Tibial artery (tissue), 4 donors: ENCODE measurements at regions of chr16 and their contacts with region 1.

Region 1: GRCh38 chr16:414395-415169 is 10.9 kb upstream of the RAB11FIP3 start:
- DNase-seq: no peak
- H3K4me3 ChIP-seq: no peak overlapping the region
- H3K27ac ChIP-seq: no peak overlapping the region
- H3K4me1 ChIP-seq: no peaks in the 10 kb centered on the region
- H3K27me3 ChIP-seq: no peaks in the 10 kb centered on the region
- CTCF ChIP-seq: no peak

Region 2: GRCh38 chr16:324451-325334 is 89.9 kb before region 1 on chr16:
- intact Hi-C with region 1: no loop called
- DNase-seq: no peak
- H3K4me3 ChIP-seq: no peak overlapping the region
- H3K27ac ChIP-seq: no peak overlapping the region
- H3K4me1 ChIP-seq: peaks cover 0 to 31% (median 17%) of the 10 kb centered on the region in 4 donors
- H3K27me3 ChIP-seq: no peaks in the 10 kb centered on the region
- CTCF ChIP-seq: no peak

Region 3: DNA sequence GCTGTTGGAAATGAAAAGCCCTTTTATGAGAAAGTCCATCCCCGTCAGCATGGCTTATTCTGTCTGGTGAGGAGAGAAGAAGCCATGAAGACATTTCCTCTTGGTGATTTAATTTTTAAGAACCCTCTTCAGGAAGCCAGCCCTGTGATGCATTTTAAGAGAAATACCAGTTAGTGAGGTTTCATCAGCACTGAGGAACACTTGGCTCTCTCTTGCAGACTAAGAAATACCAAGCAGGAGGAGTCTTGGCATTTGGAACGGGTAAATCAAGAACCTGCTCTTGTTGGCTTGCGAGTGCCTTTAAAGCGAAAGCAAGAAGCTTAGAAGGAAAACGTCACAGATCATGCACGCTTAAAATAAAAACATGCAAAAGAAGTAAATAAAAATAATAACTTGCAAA is 28.4 kb after region 1 on chr16:
- intact Hi-C with region 1: loop called (anchors 1 kb)
- DNase-seq: no peak
- H3K4me3 ChIP-seq: no peak overlapping the region
- H3K27ac ChIP-seq: no peak overlapping the region
- H3K4me1 ChIP-seq: no peaks in the 10 kb centered on the region
- H3K27me3 ChIP-seq: no peaks in the 10 kb centered on the region
- CTCF ChIP-seq: no peak